Spleen (tissue), 13 donors: ENCODE measurements at regions of chr3 and their contacts with region 1.

Region 1: GRCh38 chr3:134473868-134474546 is 11.8 kb downstream of the ANAPC13 start:
- DNase-seq: no peak
- H3K4me3 ChIP-seq: no peak overlapping the region
- H3K27ac ChIP-seq: no peak overlapping the region
- H3K4me1 ChIP-seq: peaks cover 0 to 8% (median 0%) of the 10 kb centered on the region in 6 donors
- H3K27me3 ChIP-seq: no peaks in the 10 kb centered on the region
- CTCF ChIP-seq: peak; percentile 42 to 83 (median 74)
- POLR2A ChIP-seq: no peak

Region 2: DNA sequence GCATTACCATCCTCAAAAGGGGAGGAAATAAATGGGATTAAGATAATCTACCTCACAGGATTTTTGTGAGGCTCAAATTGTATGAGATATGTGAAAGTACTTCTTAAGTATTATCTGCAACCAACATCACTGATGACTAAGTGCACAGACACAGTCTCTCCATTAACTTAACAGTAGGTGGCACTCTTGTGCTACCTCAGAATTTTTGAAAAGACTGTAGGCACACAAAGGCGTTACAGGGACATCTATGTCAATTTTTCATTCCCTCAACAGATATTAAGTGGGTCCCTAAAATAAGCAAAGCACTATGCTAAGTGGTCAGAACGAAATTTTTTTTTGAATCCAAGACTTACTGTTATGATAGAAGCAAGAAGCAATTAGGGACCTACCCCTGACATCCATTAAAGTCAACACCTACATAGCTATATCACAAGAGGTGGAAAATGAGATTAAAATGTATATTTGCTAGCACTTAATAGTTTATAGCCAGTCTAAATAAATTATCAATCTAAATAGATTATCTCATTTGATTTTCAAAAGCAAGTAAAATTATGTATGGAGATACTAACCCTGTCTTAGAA is 276.2 kb before region 1 on chr3:
- intact Hi-C with region 1: loop called (anchors 5 kb)
- DNase-seq: no peak
- H3K4me3 ChIP-seq: no peak overlapping the region
- H3K27ac ChIP-seq: no peak overlapping the region
- H3K4me1 ChIP-seq: no peaks in the 10 kb centered on the region
- H3K27me3 ChIP-seq: no peaks in the 10 kb centered on the region
- CTCF ChIP-seq: peak; percentile 11 to 75 (median 59)
- POLR2A ChIP-seq: no peak

Region 3: GRCh38 chr3:134308350-134308891 is 165.6 kb before region 1 on chr3:
- intact Hi-C with region 1: loop called (anchors 5 kb)
- DNase-seq: peak; percentile 87
- H3K4me3 ChIP-seq: peak overlapping the region in 1 of 8 donors; percentile 48
- H3K27ac ChIP-seq: peak overlapping the region in 3 of 8 donors; percentile 28 to 85 (median 51)
- H3K4me1 ChIP-seq: peaks cover 6 to 46% (median 28%) of the 10 kb centered on the region in 6 donors
- H3K27me3 ChIP-seq: peaks cover 0 to 57% (median 10%) of the 10 kb centered on the region in 7 donors
- CTCF ChIP-seq: peak; percentile 83 to 96 (median 92)
- POLR2A ChIP-seq: no peak

Region 4: DNA sequence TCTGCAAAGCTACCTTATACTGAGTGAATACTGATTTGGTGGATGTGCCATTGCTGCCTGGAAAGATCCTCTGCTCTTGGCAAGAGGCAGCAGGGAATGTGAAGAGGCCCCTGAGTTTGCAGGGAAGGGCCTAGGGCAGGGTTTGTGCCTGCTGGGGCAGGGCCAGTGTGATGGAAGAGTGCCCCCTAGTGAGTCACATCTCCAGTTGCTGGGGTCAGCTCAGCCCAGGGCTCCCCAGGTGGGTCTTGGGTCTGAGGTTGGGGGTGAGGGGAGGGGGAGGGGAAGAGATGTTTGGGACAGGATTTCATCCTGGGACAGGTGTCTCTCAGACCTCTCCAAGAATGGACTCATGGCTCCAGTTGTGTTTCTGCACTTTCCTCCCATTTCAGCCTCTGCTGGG is 95.6 kb before region 1 on chr3:
- intact Hi-C with region 1: loop called (anchors 10 kb)
- DNase-seq: peak; percentile 66
- H3K4me3 ChIP-seq: no peak overlapping the region
- H3K27ac ChIP-seq: no peak overlapping the region
- H3K4me1 ChIP-seq: peaks cover 0 to 40% (median 25%) of the 10 kb centered on the region in 6 donors
- H3K27me3 ChIP-seq: peaks cover 0 to 37% (median 11%) of the 10 kb centered on the region in 7 donors
- CTCF ChIP-seq: peak in 7 of 11 experiments; percentile 16 to 60 (median 48)
- POLR2A ChIP-seq: no peak

Region 5: DNA sequence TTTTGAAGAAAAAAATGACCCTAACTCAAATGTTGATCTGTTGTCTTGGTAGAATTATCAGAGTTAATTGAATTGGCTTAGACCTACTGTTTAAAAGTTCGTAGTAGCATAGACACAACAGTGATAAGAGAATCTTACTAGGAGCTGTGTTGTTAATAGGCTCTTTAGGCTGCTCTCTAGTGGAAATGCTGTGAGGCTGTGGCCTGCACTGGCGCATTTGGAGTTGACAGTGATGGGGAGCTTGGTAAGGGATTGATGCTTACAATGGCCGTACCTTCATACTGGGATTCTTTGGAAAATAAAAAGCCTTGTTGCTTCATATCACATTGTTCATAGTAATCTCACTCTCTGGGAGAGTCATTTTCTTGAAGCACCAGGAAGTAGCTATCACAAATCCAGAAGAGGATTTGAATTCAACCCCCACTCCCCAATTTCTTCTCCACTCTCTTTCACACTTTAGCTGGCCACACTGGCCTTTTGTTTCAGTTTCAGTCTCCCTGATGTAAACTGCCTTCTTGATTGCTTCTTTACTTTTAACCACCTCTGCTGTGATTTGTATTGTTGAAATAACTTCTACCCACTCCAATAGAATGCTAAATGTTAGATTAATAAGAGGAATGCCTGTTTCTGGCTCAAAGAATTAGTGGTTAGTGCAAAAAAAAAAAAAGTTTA is 68.4 kb after region 1 on chr3:
- intact Hi-C with region 1: no loop called
- DNase-seq: no peak
- H3K4me3 ChIP-seq: peak overlapping the region in 1 of 8 donors; percentile 47
- H3K27ac ChIP-seq: peak overlapping the region in 6 of 8 donors; percentile 51 to 87 (median 70)
- H3K4me1 ChIP-seq: peaks cover 0 to 19% (median 4%) of the 10 kb centered on the region in 6 donors
- H3K27me3 ChIP-seq: no peaks in the 10 kb centered on the region
- CTCF ChIP-seq: no peak
- POLR2A ChIP-seq: no peak

Region 6: GRCh38 chr3:134685929-134686802 is 212.2 kb after region 1 on chr3:
- intact Hi-C with region 1: no loop called
- DNase-seq: no peak
- H3K4me3 ChIP-seq: no peak overlapping the region
- H3K27ac ChIP-seq: no peak overlapping the region
- H3K4me1 ChIP-seq: no peaks in the 10 kb centered on the region
- H3K27me3 ChIP-seq: no peaks in the 10 kb centered on the region
- CTCF ChIP-seq: no peak
- POLR2A ChIP-seq: no peak